Aorta (tissue), 5 donors: ENCODE measurements at regions of chr11 and their contacts with region 1.

Region 1: GRCh38 chr11:11841723-11842420 is at the start of gene USP47:
- DNase-seq: peak; percentile 95 to 98
- ATAC-seq: peak; percentile 97
- H3K4me3 ChIP-seq: peak within 1 kb of the TSS; percentile 38 to 76
- H3K27ac ChIP-seq: peak within 1 kb of the TSS; percentile 81 to 86
- H3K4me1 ChIP-seq: peaks cover 0 to 4% of the 10 kb centered on the region in 2 donors
- H3K27me3 ChIP-seq: no peaks in the 10 kb centered on the region
- total RNA-seq, gene USP47: 58.7 to 74.9 TPM

Region 2: GRCh38 chr11:10331548-10332289 is 1510.2 kb before region 1 on chr11:
- intact Hi-C with region 1: no loop called
- DNase-seq: no peak
- ATAC-seq: no peak
- H3K4me3 ChIP-seq: no peak overlapping the region
- H3K27ac ChIP-seq: no peak overlapping the region
- H3K4me1 ChIP-seq: peaks cover 5 to 6% of the 10 kb centered on the region in 2 donors
- H3K27me3 ChIP-seq: no peaks in the 10 kb centered on the region

Region 3: DNA sequence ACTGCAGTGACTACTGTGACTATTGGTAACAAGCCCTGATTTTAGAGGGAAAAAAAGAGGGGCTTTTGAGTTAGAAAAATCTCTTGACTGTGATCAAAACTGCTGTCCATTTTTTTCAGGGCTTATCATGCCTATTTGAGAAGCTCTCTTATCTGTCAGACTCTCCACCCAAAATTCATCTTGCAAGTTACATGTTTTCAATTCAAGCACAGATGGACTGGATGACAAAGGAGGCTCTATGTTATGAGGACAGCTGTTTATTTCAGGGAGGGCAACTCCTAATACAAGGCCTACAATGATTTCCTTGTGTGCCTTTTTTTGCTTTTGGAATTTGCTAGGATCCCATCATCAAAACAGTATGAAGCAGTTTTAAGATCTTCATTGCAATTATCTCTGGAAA is 35.3 kb before region 1 on chr11:
- intact Hi-C with region 1: loop called in 1 of 2 experiments (anchors 5 kb)
- DNase-seq: no peak
- ATAC-seq: no peak
- H3K4me3 ChIP-seq: no peak overlapping the region
- H3K27ac ChIP-seq: no peak overlapping the region
- H3K4me1 ChIP-seq: no peaks in the 10 kb centered on the region
- H3K27me3 ChIP-seq: no peaks in the 10 kb centered on the region

Region 4: GRCh38 chr11:11876458-11876857 is 34.6 kb after region 1 on chr11:
- intact Hi-C with region 1: no loop called
- DNase-seq: no peak
- ATAC-seq: no peak
- H3K4me3 ChIP-seq: no peak overlapping the region
- H3K27ac ChIP-seq: no peak overlapping the region
- H3K4me1 ChIP-seq: peaks cover 2% of the 10 kb centered on the region in 2 donors
- H3K27me3 ChIP-seq: no peaks in the 10 kb centered on the region

Region 5: DNA sequence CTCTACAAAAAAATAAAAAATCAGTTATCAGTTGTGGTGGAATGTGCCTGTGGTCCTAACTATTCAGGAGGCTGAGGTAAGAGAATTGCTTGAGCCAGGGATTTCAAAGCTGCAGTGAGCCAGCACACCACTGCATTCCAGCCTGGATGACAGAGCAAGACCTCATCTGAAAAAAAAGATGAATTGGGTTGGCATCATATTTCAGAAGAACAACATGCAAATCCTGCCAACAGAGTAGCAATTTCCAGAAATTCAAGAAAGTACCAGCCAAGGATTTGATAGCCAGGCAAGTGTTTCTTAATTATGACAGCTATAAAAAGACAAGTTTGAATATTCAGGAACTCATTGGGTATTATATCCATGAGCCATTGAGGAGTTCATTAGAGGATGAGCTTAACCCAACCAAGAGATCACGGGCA is 75.1 kb after region 1 on chr11:
- intact Hi-C with region 1: loop called in 1 of 2 experiments (anchors 10 kb)
- DNase-seq: no peak
- ATAC-seq: peak; percentile 36
- H3K4me3 ChIP-seq: no peak overlapping the region
- H3K27ac ChIP-seq: peak overlapping the region in 1 of 2 donors; percentile 67
- H3K4me1 ChIP-seq: no peaks in the 10 kb centered on the region
- H3K27me3 ChIP-seq: no peaks in the 10 kb centered on the region

Region 6: DNA sequence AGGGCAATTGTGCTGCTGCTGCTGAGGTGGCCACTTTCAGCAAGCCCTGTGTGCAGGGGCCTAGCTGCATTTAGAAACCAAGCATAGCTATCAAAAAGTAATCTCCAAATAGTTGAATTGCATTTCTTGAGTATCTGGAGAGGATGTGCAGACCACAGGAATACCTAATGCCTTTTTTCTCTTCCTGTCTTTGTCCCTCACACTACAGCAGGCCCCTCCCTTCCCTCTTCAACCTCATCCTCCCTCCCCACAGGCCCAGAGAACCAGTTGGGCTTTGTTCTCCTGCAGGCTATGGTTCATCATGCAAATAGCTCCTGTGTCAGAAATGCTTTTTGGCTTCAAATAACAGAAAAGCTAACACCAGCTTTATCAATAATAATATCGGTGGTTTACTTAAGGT is 118.8 kb after region 1 on chr11:
- intact Hi-C with region 1: no loop called
- DNase-seq: peak in 1 of 2 donors; percentile 15
- ATAC-seq: no peak
- H3K4me3 ChIP-seq: no peak overlapping the region
- H3K27ac ChIP-seq: no peak overlapping the region
- H3K4me1 ChIP-seq: no peaks in the 10 kb centered on the region
- H3K27me3 ChIP-seq: no peaks in the 10 kb centered on the region